ENCODE measurements at regions of chr19 and their contacts with region 1.

Region 1: DNA sequence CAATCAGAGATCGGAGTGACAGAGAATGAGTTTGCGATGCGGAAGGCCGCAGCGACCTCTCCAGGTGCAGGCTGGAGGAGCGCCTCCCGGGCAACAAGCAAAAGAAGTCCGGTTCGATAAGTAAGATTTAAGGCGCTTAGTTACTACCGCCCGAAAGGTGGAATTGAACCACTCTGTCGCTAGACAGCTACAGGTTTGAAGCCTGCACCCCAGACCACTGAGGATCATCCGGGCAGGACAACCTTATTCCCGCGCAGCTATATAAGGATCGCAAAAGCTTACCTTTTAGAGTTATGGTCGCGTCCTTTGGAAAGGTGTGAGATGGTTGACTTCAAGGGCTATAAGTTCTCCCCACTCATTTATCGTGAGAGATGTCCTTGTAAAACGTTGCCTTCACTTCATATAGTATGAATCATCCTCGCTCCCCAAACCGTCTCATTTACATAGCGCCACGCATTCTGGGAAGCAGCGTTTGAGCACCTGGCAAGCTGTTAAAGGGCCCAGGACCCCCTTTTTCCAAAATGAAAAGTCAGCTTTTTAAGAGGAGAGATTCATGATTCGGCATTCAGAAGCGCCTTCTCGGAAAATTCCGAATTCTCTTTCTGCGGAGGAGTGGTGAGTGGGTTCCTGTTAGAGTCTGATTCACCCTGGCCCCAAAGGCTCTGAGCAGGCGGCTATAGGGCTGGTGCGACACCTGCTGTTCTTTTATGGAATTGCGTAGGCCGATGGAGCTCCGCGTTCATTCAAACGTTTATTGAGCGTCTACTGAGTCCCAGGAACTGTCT is 10.8 kb downstream of the FOSB start:
- DNase-seq: no peak
- H3K4me3 ChIP-seq: peak overlapping the region; percentile 63
- CTCF ChIP-seq: peak; percentile 87

Region 2: DNA sequence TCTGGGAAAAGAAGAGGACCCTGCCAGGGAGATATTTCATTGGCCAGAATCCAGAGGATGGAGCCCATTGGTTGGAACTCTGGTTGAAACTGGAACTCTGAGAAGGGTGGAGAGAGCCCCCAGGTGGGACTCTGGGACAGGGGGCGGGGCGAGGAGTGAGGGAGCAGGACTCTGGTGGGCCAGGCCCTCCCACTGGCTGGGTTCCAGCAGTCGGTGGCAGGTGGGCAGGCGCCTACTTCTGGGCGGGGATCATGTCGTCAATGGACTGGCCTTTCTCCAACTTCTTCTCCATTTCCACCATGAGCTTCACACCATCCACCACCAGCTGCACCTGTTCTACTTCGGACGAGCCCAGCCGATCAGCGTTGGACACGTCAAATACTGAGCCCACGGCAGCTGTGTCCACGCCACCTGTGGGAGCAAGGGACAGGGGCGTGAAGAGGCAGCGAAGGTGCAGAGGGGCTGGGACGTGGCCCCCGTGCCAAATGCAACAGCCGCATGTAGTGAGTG is 172.1 kb before region 1 on chr19:
- CTCF ChIA-PET with region 1: no interaction called
- POLR2A ChIA-PET with region 1: no interaction called
- DNase-seq: no peak
- H3K4me3 ChIP-seq: no peak overlapping the region
- CTCF ChIP-seq: no peak

Region 3: DNA sequence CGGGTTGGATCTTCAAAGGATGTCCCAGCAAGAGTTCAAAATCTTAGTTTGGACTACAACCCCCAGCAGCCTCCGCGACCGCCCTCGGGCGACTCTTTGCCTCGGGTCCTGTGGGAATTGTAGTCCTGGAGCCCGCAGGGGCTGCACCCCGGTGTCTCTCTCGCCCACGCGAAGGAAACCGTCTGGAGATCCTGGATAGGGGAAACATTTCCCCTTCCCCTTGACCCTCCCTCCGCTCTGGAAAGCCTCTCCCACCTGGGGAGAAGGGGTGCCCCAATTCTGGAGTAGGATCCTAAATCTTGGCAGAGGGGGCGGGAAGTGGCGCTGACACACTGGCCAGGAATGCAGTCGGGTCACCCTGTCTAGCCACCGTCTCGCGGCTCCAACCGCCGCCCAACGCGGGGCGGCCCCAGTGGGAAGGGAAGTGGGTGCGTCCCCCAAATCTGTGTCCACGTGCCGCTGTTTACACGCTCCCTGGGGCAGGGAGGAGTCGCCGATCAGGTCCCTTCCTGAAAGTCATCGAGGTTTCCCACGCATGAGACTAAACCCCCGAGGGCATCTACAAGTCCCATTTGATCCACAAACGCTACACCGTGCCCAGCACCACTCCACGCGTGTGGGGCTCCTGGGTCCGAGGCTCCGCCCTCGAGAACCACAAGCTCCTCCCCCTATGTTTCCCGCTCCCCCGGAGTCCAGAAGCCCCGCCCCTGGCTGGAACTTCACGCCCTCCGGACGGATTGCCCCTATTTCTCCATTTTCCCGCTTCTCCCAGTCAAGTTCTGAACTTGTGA is 73.0 kb before region 1 on chr19:
- CTCF ChIA-PET with region 1: interaction called, 65 read pairs
- POLR2A ChIA-PET with region 1: interaction called, 3 read pairs
- DNase-seq: no peak
- H3K4me3 ChIP-seq: peak overlapping the region; percentile 88
- CTCF ChIP-seq: no peak

Region 4: DNA sequence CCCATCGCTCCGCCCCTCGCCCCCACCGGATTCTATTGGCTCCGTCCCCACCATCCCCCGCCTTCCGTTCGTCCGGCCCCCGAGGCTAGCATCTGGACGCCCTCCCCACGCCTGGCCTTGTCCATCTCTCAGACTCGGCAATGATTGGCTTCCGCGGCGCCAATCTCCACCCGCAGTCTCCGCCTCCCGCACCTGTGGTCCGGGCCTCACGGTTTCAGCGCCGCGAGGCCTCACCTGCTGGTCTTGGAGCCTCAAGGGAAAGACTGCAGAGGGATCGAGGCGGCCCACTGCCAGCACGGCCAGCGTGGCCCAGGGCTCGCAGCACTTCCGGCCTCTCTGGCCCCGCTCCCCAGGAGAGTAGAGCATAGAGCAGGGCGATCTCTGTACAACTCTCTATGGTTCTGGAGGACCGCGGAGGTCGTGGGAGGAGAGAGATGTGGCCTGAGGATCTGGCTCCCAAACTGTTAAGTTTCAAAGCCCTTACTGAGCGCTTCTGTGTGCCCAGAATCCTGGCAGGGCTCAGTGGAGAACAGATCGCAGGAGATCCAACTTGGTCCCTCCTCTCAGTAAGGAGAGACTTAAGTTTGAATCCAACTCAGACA is 55.0 kb before region 1 on chr19 and contains the start of gene ERCC1:
- CTCF ChIA-PET with region 1: interaction called, 197 read pairs
- POLR2A ChIA-PET with region 1: interaction called, 7 read pairs
- DNase-seq: no peak
- H3K4me3 ChIP-seq: peak within 1 kb of the TSS; percentile 82
- CTCF ChIP-seq: no peak

Region 5: GRCh38 chr19:45455707-45456499 is 22.7 kb before region 1 on chr19:
- CTCF ChIA-PET with region 1: interaction called, 20 read pairs
- POLR2A ChIA-PET with region 1: interaction called, 4 read pairs
- DNase-seq: peak; percentile 98
- H3K4me3 ChIP-seq: peak overlapping the region; percentile 42
- CTCF ChIP-seq: no peak

Region 6: DNA sequence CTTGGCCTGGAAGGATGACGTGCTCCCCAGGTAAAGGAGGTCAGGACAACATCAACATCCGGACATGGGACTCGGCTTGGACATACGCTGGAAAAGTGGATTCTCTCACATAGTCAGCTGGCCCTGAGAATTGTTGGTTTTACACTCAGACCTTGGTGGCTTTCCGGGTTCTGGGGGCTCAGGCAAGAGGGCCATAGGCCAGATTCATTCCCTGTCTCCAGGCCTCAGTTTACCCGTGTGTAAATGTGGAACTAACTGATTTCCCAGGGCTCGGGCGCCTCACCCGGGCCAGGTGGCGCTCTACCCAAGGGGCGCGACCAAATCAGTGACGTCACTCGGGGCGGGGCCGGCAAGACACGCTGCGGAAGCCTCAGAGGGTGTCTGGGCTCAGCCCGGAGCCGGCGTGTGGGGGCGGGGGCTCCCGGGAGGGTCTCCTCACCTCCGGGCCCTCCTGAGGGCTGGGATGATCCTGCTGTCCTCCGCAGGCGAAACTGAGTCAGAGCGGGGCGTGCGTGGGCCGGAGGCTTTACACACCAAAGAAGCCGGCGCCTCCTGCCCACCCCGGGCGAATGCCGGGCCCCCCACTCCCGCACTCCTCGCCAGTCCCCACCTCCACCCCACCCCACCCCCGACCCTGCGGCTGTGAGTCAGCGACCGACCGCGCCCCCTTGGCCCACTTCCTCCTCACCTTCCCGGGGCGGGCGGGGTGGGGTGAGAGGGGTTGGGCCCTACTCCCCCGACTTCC is 27.8 kb after region 1 on chr19:
- CTCF ChIA-PET with region 1: interaction called, 23 read pairs
- POLR2A ChIA-PET with region 1: interaction called, 3 read pairs
- DNase-seq: no peak
- H3K4me3 ChIP-seq: peak overlapping the region; percentile 82
- CTCF ChIP-seq: peak; percentile 70

Region 7: GRCh38 chr19:45547976-45548609 is 69.4 kb after region 1 on chr19:
- CTCF ChIA-PET with region 1: no interaction called
- POLR2A ChIA-PET with region 1: no interaction called
- DNase-seq: no peak
- H3K4me3 ChIP-seq: no peak overlapping the region
- CTCF ChIP-seq: no peak